Naive thymus-derived CD4-positive, alpha-beta T cell (primary cell): ENCODE measurements at regions of chr6 and their contacts with region 1.

Region 1: GRCh38 chr6:3281631-3282475 is 23.1 kb downstream of the PSMG4 start:
- DNase-seq: no peak
- ATAC-seq: no peak
- H3K4me3 ChIP-seq: no peak overlapping the region
- H3K4me3 Mint-ChIP-seq: no peak overlapping the region
- H3K27ac ChIP-seq: no peak overlapping the region
- H3K27ac Mint-ChIP-seq: no peak overlapping the region
- H3K4me1 ChIP-seq: peaks cover 0 to 5% of the 10 kb centered on the region in 2 donors
- H3K4me1 Mint-ChIP-seq: peaks cover 0 to 6% (median 4%) of the 10 kb centered on the region in 7 donors
- H3K27me3 ChIP-seq: no peaks in the 10 kb centered on the region
- H3K27me3 Mint-ChIP-seq: no peaks in the 10 kb centered on the region

Region 2: GRCh38 chr6:3125815-3126214 is 156.0 kb before region 1 on chr6:
- CTCF ChIA-PET with region 1: no interaction called
- POLR2A ChIA-PET with region 1: no interaction called
- intact Hi-C with region 1: loop called in 1 of 2 experiments (anchors 1 kb)
- DNase-seq: no peak
- ATAC-seq: no peak
- H3K4me3 ChIP-seq: no peak overlapping the region
- H3K4me3 Mint-ChIP-seq: no peak overlapping the region
- H3K27ac ChIP-seq: no peak overlapping the region
- H3K27ac Mint-ChIP-seq: no peak overlapping the region
- H3K4me1 ChIP-seq: no peaks in the 10 kb centered on the region
- H3K4me1 Mint-ChIP-seq: peaks cover 0 to 3% (median 0%) of the 10 kb centered on the region in 7 donors
- H3K27me3 ChIP-seq: no peaks in the 10 kb centered on the region
- H3K27me3 Mint-ChIP-seq: no peaks in the 10 kb centered on the region

Region 3: GRCh38 chr6:3410385-3411360 is 128.8 kb after region 1 on chr6:
- CTCF ChIA-PET with region 1: interaction called, 5 read pairs
- POLR2A ChIA-PET with region 1: no interaction called
- intact Hi-C with region 1: loop called in 1 of 2 experiments (anchors 1 kb)
- DNase-seq: peak; percentile 30 to 72 (median 60)
- ATAC-seq: peak; percentile 78
- H3K4me3 ChIP-seq: no peak overlapping the region
- H3K4me3 Mint-ChIP-seq: no peak overlapping the region
- H3K27ac ChIP-seq: no peak overlapping the region
- H3K27ac Mint-ChIP-seq: peak overlapping the region in 6 of 9 donors; percentile 34 to 84 (median 66)
- H3K4me1 ChIP-seq: peaks cover 0 to 11% of the 10 kb centered on the region in 2 donors
- H3K4me1 Mint-ChIP-seq: peaks cover 2 to 28% (median 20%) of the 10 kb centered on the region in 7 donors
- H3K27me3 ChIP-seq: no peaks in the 10 kb centered on the region
- H3K27me3 Mint-ChIP-seq: peaks cover 0 to 4% (median 0%) of the 10 kb centered on the region in 5 donors

Region 4: GRCh38 chr6:3489027-3489757 is 207.3 kb after region 1 on chr6:
- CTCF ChIA-PET with region 1: no interaction called
- POLR2A ChIA-PET with region 1: no interaction called
- intact Hi-C with region 1: no loop called
- DNase-seq: no peak
- ATAC-seq: no peak
- H3K4me3 ChIP-seq: no peak overlapping the region
- H3K4me3 Mint-ChIP-seq: no peak overlapping the region
- H3K27ac ChIP-seq: no peak overlapping the region
- H3K27ac Mint-ChIP-seq: no peak overlapping the region
- H3K4me1 ChIP-seq: no peaks in the 10 kb centered on the region
- H3K4me1 Mint-ChIP-seq: peaks cover 0 to 4% (median 0%) of the 10 kb centered on the region in 7 donors
- H3K27me3 ChIP-seq: no peaks in the 10 kb centered on the region
- H3K27me3 Mint-ChIP-seq: peaks cover 11 to 28% (median 22%) of the 10 kb centered on the region in 5 donors

Region 5: DNA sequence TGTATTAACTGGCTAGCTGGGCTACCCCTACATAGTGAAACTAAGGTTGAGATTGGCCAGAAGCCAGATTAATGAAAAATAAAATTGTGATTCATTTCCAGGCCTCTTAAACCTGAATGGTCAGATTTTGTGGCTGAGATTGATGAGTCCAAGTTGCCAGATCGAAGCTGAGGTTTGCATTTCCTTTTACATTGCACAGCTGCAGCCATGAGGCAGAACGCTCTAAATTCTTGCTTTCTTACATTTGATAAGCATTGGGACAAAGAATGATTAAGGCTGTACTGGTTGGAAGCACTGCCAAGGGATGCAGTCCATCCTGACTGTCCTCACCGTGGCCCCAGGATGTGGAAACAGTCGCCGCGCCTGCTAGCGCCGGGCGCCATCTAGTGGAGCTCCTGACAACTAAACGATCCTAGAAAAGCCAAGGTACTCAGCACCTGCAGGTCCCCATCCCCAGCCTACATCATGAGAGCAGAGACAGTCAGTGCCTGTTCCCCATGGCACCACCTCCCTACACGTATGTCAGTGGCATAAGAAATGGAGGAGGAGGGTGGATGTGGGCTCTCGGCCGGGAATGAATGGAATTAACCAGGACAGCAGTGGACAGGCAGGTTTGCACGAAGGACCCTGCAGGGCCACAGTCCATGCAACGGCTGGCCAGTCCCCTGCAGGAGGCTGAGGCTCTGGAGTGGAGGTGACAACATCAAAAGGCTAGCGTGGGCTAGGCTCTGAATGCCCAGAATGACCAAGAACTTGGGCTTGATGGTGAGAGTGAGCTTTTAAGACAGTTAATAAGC is 450.7 kb after region 1 on chr6:
- CTCF ChIA-PET with region 1: interaction called, 67 read pairs
- POLR2A ChIA-PET with region 1: interaction called, 8 read pairs
- intact Hi-C with region 1: loop called (anchors 1 kb)
- DNase-seq: peak; percentile 34 to 70 (median 60)
- ATAC-seq: peak; percentile 85
- H3K4me3 ChIP-seq: no peak overlapping the region
- H3K4me3 Mint-ChIP-seq: peak overlapping the region in 1 of 10 donors; percentile 42
- H3K27ac ChIP-seq: no peak overlapping the region
- H3K27ac Mint-ChIP-seq: peak overlapping the region in 1 of 9 donors; percentile 88
- H3K4me1 ChIP-seq: no peaks in the 10 kb centered on the region
- H3K4me1 Mint-ChIP-seq: peaks cover 0 to 4% (median 3%) of the 10 kb centered on the region in 7 donors
- H3K27me3 ChIP-seq: no peaks in the 10 kb centered on the region
- H3K27me3 Mint-ChIP-seq: peaks cover 6 to 22% (median 15%) of the 10 kb centered on the region in 5 donors

Region 6: GRCh38 chr6:3977875-3978711 is 696.2 kb after region 1 on chr6:
- CTCF ChIA-PET with region 1: interaction called, 4 read pairs
- POLR2A ChIA-PET with region 1: no interaction called
- intact Hi-C with region 1: loop called in 1 of 2 experiments (anchors 5 kb)
- DNase-seq: peak in 8 of 9 donors; percentile 23 to 69 (median 52)
- ATAC-seq: peak; percentile 98
- H3K4me3 ChIP-seq: no peak overlapping the region
- H3K4me3 Mint-ChIP-seq: no peak overlapping the region
- H3K27ac ChIP-seq: no peak overlapping the region
- H3K27ac Mint-ChIP-seq: peak overlapping the region in 3 of 9 donors; percentile 5 to 66 (median 5)
- H3K4me1 ChIP-seq: no peaks in the 10 kb centered on the region
- H3K4me1 Mint-ChIP-seq: peaks cover 6 to 13% (median 10%) of the 10 kb centered on the region in 7 donors
- H3K27me3 ChIP-seq: no peaks in the 10 kb centered on the region
- H3K27me3 Mint-ChIP-seq: peaks cover 0 to 30% (median 0%) of the 10 kb centered on the region in 5 donors